Dendritic cell treated with granulocyte-macrophage colony-stimulating factor and Interleukin-4, amounts not matched to agents 40 ng/mL and 50 ng/mL, for 4 days (primary cell): ENCODE measurements at regions of chr11 and their contacts with region 1.

Region 1: DNA sequence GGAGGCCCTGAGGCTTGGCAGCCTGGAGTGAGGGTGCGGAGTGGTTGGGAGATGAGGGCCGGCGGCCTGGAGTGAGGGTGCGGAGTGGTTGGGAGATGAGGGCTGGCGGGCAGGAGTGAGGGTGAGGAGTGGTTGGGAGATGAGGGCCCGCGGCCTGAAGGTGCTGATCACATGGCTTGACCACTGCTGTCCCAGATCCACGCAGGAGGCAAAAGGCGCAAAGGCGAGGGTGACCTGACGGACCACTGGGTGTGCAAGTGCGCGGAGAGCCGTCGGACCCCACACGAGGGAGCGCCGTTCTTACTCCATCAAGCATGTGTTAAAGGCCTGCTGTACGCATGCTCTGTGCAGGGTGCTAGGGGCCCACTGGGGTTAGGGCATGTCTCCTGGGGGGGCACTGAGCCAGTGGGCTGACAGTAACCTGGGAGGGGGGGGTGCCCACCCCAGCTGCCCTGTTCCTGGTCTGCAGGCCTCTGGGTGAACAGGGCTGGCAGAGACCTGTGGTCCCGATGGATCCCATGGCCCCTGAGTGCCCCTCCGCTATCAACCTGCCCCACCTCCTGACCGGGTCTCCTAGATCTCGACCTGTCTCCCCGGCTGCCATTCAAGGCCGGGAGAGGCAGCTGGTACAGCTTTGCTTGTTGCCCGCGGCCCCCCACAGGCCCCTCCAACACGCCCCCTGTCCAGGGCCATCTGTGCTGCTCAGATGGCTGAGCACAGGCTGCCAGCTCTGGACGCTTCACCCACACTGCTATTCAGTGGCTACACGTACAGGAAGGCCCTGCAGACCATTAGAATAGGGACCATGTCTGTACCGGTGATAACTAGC is 21.1 kb downstream of the MRGPRD start:
- H3K4me3 Mint-ChIP-seq: no peak overlapping the region
- H3K27ac Mint-ChIP-seq: peak overlapping the region; percentile 20
- H3K4me1 Mint-ChIP-seq: peaks cover 20% of the 10 kb centered on the region
- H3K27me3 Mint-ChIP-seq: peaks cover 26% of the 10 kb centered on the region

Region 2: GRCh38 chr11:68970921-68971636 is 11.4 kb after region 1 on chr11:
- intact Hi-C with region 1: loop called (anchors 1 kb)
- H3K4me3 Mint-ChIP-seq: no peak overlapping the region
- H3K27ac Mint-ChIP-seq: no peak overlapping the region
- H3K4me1 Mint-ChIP-seq: peaks cover 5% of the 10 kb centered on the region
- H3K27me3 Mint-ChIP-seq: peaks cover 26% of the 10 kb centered on the region